ENCODE measurements at regions of chr3 and their contacts with region 1.

Region 1: GRCh38 chr3:10738688-10739372 is 77.2 kb upstream of the SLC6A11 start:
- DNase-seq: peak; percentile 75 to 85 (median 81)
- ATAC-seq: peak; percentile 97
- H3K4me3 ChIP-seq: no peak overlapping the region
- H3K27ac ChIP-seq: no peak overlapping the region
- H3K4me1 ChIP-seq: peaks cover 0 to 4% of the 10 kb centered on the region in 2 experiments; a peak in 1 of 5 replicates
- H3K27me3 ChIP-seq: peaks cover 3 to 4% of the 10 kb centered on the region in 2 experiments; a peak in 1 of 5 replicates
- CTCF ChIP-seq: peak; percentile 87 to 94 (median 89)
- EP300 ChIP-seq: no peak
- POLR2A ChIP-seq: no peak
- RAD21 ChIP-seq: peak; percentile 85 to 89

Region 2: DNA sequence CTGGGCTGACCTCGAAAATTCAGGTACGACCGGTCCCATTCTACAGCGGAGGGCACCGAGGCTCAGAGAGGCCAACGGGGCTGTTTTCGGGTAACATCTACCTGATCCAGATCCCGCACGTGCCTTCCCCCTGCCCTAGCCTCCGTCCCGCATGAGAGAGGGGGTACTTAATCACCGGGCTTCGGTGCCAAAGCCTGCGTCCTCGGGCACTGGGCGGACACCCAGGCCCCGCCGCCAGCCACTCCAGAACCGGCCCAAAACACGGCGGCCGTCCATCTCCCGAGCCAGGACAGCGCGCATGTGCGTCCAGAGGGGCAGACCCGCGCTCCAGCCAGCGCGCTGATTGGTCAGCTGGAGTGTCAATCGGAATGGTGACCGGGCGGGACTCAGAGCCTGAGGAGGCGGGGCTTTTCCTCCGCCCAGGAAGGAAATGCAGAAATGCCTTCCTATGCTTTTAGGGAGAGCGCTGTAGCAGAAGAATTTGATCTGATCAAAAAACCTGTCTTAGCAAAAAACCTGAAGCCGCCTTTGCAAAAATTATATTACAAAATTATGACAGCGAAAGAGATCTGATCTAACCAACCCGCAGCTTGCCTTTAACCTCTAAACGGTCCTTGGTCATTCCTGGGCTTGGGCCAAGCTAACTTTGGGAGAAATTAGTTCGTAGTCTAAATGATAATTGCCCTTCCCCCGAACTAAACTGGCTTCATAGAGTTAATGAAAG is 895.0 kb before region 1 on chr3 and contains the start of gene RPUSD3:
- CTCF ChIA-PET with region 1: no interaction called
- POLR2A ChIA-PET with region 1: no interaction called
- in situ Hi-C with region 1: loop called (anchors 25 kb)
- intact Hi-C with region 1: no loop called
- DNase-seq: peak; percentile 99 to 100 (median 100)
- ATAC-seq: peak; percentile 99
- H3K4me3 ChIP-seq: peak within 1 kb of the TSS; percentile 72
- H3K27ac ChIP-seq: peak within 1 kb of the TSS; percentile 73
- H3K4me1 ChIP-seq: peaks cover 7 to 22% of the 10 kb centered on the region in 2 experiments; a peak in 2 of 5 replicates
- H3K27me3 ChIP-seq: no peaks in the 10 kb centered on the region
- CTCF ChIP-seq: no peak
- EP300 ChIP-seq: no peak; the same call in 1 of the 2 replicates
- POLR2A ChIP-seq: peak; percentile 94
- RAD21 ChIP-seq: no peak
- polyA plus RNA-seq, gene RPUSD3: 13.8 to 26.4 TPM

Region 3: DNA sequence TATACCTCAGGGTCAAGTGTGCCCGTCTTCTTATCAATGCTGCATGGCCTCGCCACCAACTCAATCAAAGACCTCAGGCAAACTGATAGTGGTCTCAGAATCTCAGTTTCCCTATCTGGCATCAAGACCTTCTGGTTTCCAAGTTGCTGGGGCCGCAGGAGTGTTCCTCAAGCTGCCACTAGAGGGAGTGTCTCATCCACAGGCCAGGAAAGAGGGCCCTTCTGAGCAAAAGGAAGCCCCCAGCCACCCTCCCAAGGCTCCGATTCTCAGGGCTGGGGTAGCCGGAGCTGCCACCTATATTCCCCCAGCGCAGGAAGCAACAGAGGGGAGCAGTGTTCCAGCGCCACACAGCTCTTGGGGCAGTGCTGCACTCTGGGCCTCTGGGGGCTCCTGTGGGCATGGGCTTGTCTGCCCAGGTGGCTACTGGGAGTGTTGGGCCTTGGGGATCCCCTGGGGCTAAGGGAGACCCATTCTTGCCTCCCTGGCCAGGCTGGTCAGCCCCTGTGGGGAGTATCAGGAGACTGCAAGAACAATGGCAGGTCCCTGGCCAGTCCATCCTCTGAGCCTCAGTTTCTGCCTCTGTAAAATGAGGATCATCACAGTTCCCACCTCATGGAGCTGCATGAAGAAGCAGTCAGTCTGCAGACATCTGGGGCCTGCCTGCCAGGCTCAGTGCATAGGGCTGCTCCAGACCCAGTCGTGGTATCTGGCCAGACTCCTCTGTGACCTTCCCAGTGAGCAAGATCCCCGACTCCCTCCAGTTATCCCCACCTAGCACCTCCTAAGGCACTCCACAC is 394.5 kb before region 1 on chr3:
- CTCF ChIA-PET with region 1: interaction called, 13 read pairs
- POLR2A ChIA-PET with region 1: no interaction called
- in situ Hi-C with region 1: no loop called
- intact Hi-C with region 1: loop called (anchors 2 kb)
- DNase-seq: peak; percentile 72 to 82 (median 80)
- ATAC-seq: peak; percentile 76
- H3K4me3 ChIP-seq: no peak overlapping the region
- H3K27ac ChIP-seq: no peak overlapping the region
- H3K4me1 ChIP-seq: peaks cover 0 to 16% of the 10 kb centered on the region in 2 experiments; a peak in 1 of 5 replicates
- H3K27me3 ChIP-seq: peaks cover 45 to 83% of the 10 kb centered on the region in 2 experiments; a peak in 4 of 5 replicates
- CTCF ChIP-seq: peak; percentile 82 to 96 (median 93)
- EP300 ChIP-seq: no peak
- POLR2A ChIP-seq: no peak
- RAD21 ChIP-seq: peak; percentile 74 to 90

Region 4: DNA sequence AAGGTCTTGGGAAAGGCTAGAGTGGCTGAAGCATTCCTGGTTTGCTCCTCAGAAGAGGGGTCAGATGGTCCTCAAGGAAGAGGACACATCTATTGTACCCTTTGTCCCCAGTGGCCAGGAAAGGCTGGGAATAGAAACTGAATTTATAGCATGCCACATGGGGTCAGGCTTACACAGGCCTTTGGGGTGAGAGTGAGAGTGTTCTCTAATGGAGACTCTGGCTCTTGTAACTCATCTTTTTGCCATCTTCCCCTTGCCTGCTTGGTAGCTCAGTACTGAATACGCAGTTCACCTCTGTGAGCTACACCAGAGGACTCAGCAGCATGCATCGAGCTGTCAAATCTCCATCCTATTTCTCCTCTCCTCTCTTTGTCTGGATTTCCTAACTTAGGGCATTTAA is 321.0 kb before region 1 on chr3:
- CTCF ChIA-PET with region 1: interaction called, 13 read pairs
- POLR2A ChIA-PET with region 1: interaction called, 3 read pairs
- in situ Hi-C with region 1: no loop called
- intact Hi-C with region 1: loop called (anchors 2 kb)
- DNase-seq: peak; percentile 38 to 44 (median 42)
- ATAC-seq: peak; percentile 68
- H3K4me3 ChIP-seq: no peak overlapping the region
- H3K27ac ChIP-seq: no peak overlapping the region
- H3K4me1 ChIP-seq: peaks cover 8% of the 10 kb centered on the region in 2 experiments; a peak in 4 of 5 replicates
- H3K27me3 ChIP-seq: peaks cover 24 to 67% of the 10 kb centered on the region in 2 experiments; a peak in 4 of 5 replicates
- CTCF ChIP-seq: peak; percentile 47 to 82 (median 77); a peak in 4 of 6 replicates
- EP300 ChIP-seq: no peak
- POLR2A ChIP-seq: no peak
- RAD21 ChIP-seq: peak; percentile 71 to 86

Region 5: GRCh38 chr3:10557781-10558373 is 181.0 kb before region 1 on chr3:
- CTCF ChIA-PET with region 1: no interaction called
- POLR2A ChIA-PET with region 1: no interaction called
- in situ Hi-C with region 1: no loop called
- intact Hi-C with region 1: no loop called
- DNase-seq: no peak
- ATAC-seq: 0 out of 3 replicates have a peak, but pooled peaks have one; percentile 36
- H3K4me3 ChIP-seq: no peak overlapping the region
- H3K27ac ChIP-seq: no peak overlapping the region
- H3K4me1 ChIP-seq: no peaks in the 10 kb centered on the region; a peak in 1 of 5 replicates
- H3K27me3 ChIP-seq: peaks cover 3 to 25% of the 10 kb centered on the region in 2 experiments; a peak in 2 of 5 replicates
- CTCF ChIP-seq: no peak
- EP300 ChIP-seq: no peak
- POLR2A ChIP-seq: no peak
- RAD21 ChIP-seq: no peak

Region 6: DNA sequence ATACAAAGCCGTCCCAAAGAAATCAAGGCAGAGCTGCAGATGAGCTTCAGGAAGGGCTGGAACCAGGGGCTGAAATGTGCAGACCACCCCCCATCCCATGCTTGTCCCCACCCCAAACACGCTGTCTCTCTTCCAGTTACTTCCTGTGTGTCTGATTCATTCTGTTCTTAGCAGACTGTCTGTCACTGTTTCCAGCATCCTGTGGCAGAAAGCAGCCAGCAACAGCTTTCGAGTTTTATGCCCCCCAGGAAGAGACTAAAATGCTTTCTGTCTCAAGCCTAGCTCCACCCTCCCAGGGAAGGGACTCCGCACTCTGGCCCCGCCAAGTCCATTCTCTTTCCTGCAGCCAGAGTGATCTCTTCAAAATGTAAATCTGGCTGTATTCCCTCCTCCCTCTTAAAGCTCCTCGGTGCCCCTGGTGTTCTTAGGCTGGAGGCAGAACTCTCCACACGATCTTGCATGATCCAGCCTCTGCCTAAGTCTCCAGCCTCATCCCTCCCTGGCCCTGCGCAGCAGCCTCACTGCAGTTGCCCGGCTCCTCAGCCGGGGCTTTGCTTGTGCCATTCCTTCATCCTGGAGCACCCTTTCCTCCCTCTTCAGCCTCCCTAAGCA is 457.0 kb after region 1 on chr3:
- CTCF ChIA-PET with region 1: no interaction called
- POLR2A ChIA-PET with region 1: no interaction called
- in situ Hi-C with region 1: no loop called
- intact Hi-C with region 1: no loop called
- DNase-seq: no peak
- ATAC-seq: no peak
- H3K4me3 ChIP-seq: no peak overlapping the region
- H3K27ac ChIP-seq: no peak overlapping the region
- H3K4me1 ChIP-seq: no peaks in the 10 kb centered on the region
- H3K27me3 ChIP-seq: peaks cover 25 to 38% of the 10 kb centered on the region in 2 experiments; a peak in 4 of 5 replicates
- CTCF ChIP-seq: no peak
- EP300 ChIP-seq: no peak
- POLR2A ChIP-seq: no peak
- RAD21 ChIP-seq: no peak